Activated CD8-positive, alpha-beta T cell treated with anti-CD3 and anti-CD28 coated beads for 36 hours (primary cell): ENCODE measurements at regions of chr11 and their contacts with region 1.

Region 1: GRCh38 chr11:3217676-3218482 is 734 bp downstream of the MRGPRG start:
- DNase-seq: no peak
- ATAC-seq: no peak
- H3K4me3 Mint-ChIP-seq: no peak overlapping the region
- H3K27ac Mint-ChIP-seq: no peak overlapping the region
- H3K4me1 Mint-ChIP-seq: peaks cover 6% of the 10 kb centered on the region
- H3K27me3 Mint-ChIP-seq: peaks cover 4% of the 10 kb centered on the region
- CTCF ChIP-seq: no peak

Region 2: GRCh38 chr11:3109921-3110706 is 107.8 kb before region 1 on chr11:
- CTCF ChIA-PET with region 1: interaction called, 20 read pairs
- POLR2A ChIA-PET with region 1: no interaction called
- intact Hi-C with region 1: loop called (anchors 2 kb)
- DNase-seq: peak; percentile 63
- ATAC-seq: peak; percentile 99
- H3K4me3 Mint-ChIP-seq: no peak overlapping the region
- H3K27ac Mint-ChIP-seq: no peak overlapping the region
- H3K4me1 Mint-ChIP-seq: no peaks in the 10 kb centered on the region
- H3K27me3 Mint-ChIP-seq: no peaks in the 10 kb centered on the region
- CTCF ChIP-seq: peak; percentile 75